Activated CD4-positive, alpha-beta memory T cell treated with anti-CD3 and anti-CD28 coated beads for 36 hours (primary cell): ENCODE measurements at regions of chr15 and their contacts with region 1.

Region 1: DNA sequence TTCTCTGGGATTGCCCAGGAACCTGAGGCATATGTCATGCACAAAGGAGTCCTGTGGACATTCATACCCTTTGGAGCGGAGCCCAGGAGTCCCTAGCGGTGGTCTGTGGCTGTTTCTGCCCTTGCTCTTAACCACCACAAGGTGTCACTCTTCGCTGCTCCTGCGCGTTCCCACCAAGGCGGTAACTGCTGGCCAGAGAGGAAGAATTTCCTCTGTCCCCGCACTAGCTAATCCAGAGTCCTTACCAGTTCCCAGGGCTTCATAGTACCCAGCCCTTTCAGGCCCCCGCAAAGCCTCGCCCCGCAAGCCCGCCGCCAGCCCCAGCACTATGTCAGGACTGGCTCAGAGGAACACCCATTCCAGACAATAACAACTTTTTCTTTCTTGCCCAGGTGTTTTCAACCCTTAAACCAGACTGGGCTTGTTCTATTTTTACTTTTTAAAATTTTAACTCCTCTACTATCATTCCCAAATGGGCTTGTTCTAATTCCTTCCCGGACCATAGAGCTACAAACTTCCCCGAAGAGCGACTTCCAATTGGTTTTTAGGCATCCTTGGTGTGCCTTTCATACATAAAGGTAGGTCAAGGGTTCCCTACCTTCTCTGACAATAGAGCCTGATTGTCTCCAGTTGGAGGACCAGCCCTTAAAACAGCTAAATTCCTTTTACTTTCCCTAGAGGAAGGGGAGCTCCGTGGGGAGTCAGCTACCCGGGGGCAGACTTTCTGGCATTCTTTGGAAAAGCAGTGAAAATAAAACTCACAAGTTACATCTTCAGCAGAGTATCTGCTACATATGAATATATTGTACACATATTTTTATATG is 31.8 kb upstream of the ZNF774 start:
- DNase-seq: peak; percentile 79
- H3K4me3 Mint-ChIP-seq: no peak overlapping the region
- H3K27ac Mint-ChIP-seq: no peak overlapping the region
- H3K4me1 Mint-ChIP-seq: peaks cover 3% of the 10 kb centered on the region
- H3K27me3 Mint-ChIP-seq: no peaks in the 10 kb centered on the region

Region 2: GRCh38 chr15:90225504-90226234 is 94.6 kb before region 1 on chr15:
- CTCF ChIA-PET with region 1: no interaction called
- POLR2A ChIA-PET with region 1: no interaction called
- intact Hi-C with region 1: no loop called
- DNase-seq: no peak
- H3K4me3 Mint-ChIP-seq: no peak overlapping the region
- H3K27ac Mint-ChIP-seq: no peak overlapping the region
- H3K4me1 Mint-ChIP-seq: peaks cover 17% of the 10 kb centered on the region
- H3K27me3 Mint-ChIP-seq: no peaks in the 10 kb centered on the region

Region 3: GRCh38 chr15:90336705-90337141 is 16.4 kb after region 1 on chr15:
- CTCF ChIA-PET with region 1: interaction called, 10 read pairs
- POLR2A ChIA-PET with region 1: no interaction called
- intact Hi-C with region 1: no loop called
- DNase-seq: peak; percentile 12
- H3K4me3 Mint-ChIP-seq: no peak overlapping the region
- H3K27ac Mint-ChIP-seq: no peak overlapping the region
- H3K4me1 Mint-ChIP-seq: peaks cover 7% of the 10 kb centered on the region
- H3K27me3 Mint-ChIP-seq: no peaks in the 10 kb centered on the region

Region 4: DNA sequence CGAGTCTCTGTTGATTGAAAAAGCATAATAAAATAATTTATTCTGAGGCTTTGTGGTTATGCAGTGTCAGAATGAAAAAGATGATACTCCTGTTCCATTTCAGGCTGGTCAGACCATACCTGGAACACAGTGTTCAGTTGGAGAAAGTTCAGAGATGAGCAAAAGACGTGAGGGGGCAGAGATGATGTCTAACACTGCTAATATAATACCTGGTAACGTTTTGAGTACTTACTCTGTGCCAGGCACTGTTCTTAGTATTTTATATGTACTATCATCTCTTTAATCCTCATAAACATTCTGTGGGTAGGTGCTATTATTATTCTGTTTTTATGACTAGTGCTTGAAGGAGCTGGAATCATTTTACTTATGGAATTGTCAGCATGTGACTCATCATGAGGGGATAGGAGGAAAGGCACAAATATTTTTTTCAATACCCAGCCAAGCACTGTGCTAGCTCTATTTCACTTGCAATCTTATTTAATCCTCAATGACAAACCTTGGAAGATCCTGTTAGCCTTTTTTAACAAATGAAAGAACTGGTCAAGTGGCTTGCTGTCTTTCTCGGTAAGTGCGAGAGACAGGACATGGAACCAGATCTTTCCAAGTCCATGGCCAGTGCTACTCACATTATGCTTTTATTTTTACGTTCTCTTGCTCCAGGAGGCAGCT is 99.6 kb after region 1 on chr15:
- CTCF ChIA-PET with region 1: interaction called, 17 read pairs
- POLR2A ChIA-PET with region 1: no interaction called
- intact Hi-C with region 1: no loop called
- DNase-seq: peak; percentile 62
- H3K4me3 Mint-ChIP-seq: peak overlapping the region; percentile 61
- H3K27ac Mint-ChIP-seq: peak overlapping the region; percentile 90
- H3K4me1 Mint-ChIP-seq: peaks cover 75% of the 10 kb centered on the region
- H3K27me3 Mint-ChIP-seq: no peaks in the 10 kb centered on the region

Region 5: GRCh38 chr15:90482124-90483011 is 162.1 kb after region 1 on chr15:
- CTCF ChIA-PET with region 1: interaction called, 107 read pairs
- POLR2A ChIA-PET with region 1: no interaction called
- intact Hi-C with region 1: loop called (anchors 1 kb)
- DNase-seq: peak; percentile 62
- H3K4me3 Mint-ChIP-seq: no peak overlapping the region
- H3K27ac Mint-ChIP-seq: peak overlapping the region; percentile 9
- H3K4me1 Mint-ChIP-seq: peaks cover 30% of the 10 kb centered on the region
- H3K27me3 Mint-ChIP-seq: no peaks in the 10 kb centered on the region

Region 6: GRCh38 chr15:90648137-90649070 is 328.1 kb after region 1 on chr15:
- CTCF ChIA-PET with region 1: interaction called, 10 read pairs
- POLR2A ChIA-PET with region 1: no interaction called
- intact Hi-C with region 1: no loop called
- DNase-seq: peak; percentile 81
- H3K4me3 Mint-ChIP-seq: peak overlapping the region; percentile 53
- H3K27ac Mint-ChIP-seq: peak overlapping the region; percentile 92
- H3K4me1 Mint-ChIP-seq: peaks cover 24% of the 10 kb centered on the region
- H3K27me3 Mint-ChIP-seq: no peaks in the 10 kb centered on the region